Activated T-helper 2 cell treated with anti-CD3 and anti-CD28 coated beads, Interferon-gamma antibody, Interleukin-2, Interleukin-4, amounts not matched to agents 10 μg/mL and 5 μg/mL and 100 μg/mL, durations not matched to agents 14 hours and 24 hours and 36 hours (primary cell): ENCODE measurements at regions of chr16 and their contacts with region 1.

Region 1: DNA sequence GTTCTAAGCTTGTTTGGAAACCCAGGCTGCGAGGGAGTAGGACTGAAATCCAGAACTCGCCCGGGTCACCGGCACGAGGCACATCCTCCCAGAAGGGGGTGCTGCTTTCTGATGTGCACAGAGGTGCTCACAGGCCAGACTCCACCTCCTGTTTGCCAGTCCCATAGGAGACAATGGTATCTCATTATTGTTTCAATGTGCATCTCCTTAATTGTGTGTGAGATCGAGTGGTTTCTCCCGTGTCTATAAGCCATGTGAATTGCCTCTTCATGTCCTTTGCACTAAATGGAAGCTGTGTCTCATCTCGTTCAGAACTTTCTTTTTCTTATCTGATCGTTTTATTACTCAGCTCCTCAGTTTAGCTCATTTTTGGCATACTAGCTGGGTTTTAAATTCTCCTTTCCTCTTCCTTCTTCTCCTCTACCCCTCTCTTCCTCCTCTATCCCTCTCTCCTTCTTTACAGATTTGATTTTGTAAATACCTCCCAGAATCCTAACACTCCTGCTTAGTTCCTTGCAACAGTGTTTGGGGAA is 32.1 kb upstream of the PRKCB start:
- DNase-seq: peak; percentile 60
- H3K4me3 Mint-ChIP-seq: no peak overlapping the region
- H3K27ac Mint-ChIP-seq: peak overlapping the region; percentile 11
- H3K4me1 Mint-ChIP-seq: peaks cover 12% of the 10 kb centered on the region
- H3K27me3 Mint-ChIP-seq: peaks cover 6% of the 10 kb centered on the region

Region 2: GRCh38 chr16:22829997-22830396 is 973.7 kb before region 1 on chr16:
- intact Hi-C with region 1: no loop called
- DNase-seq: no peak
- H3K4me3 Mint-ChIP-seq: no peak overlapping the region
- H3K27ac Mint-ChIP-seq: no peak overlapping the region
- H3K4me1 Mint-ChIP-seq: no peaks in the 10 kb centered on the region
- H3K27me3 Mint-ChIP-seq: peaks cover 8% of the 10 kb centered on the region

Region 3: GRCh38 chr16:23842137-23842600 is 38.5 kb after region 1 on chr16:
- intact Hi-C with region 1: loop called (anchors 2 kb)
- DNase-seq: peak; percentile 25
- H3K4me3 Mint-ChIP-seq: peak overlapping the region; percentile 27
- H3K27ac Mint-ChIP-seq: peak overlapping the region; percentile 88
- H3K4me1 Mint-ChIP-seq: peaks cover 80% of the 10 kb centered on the region
- H3K27me3 Mint-ChIP-seq: no peaks in the 10 kb centered on the region

Region 4: GRCh38 chr16:23959072-23959751 is 155.6 kb after region 1 on chr16:
- intact Hi-C with region 1: loop called (anchors 5 kb)
- DNase-seq: no peak
- H3K4me3 Mint-ChIP-seq: peak overlapping the region; percentile 37
- H3K27ac Mint-ChIP-seq: peak overlapping the region; percentile 74
- H3K4me1 Mint-ChIP-seq: peaks cover 52% of the 10 kb centered on the region
- H3K27me3 Mint-ChIP-seq: no peaks in the 10 kb centered on the region

Region 5: GRCh38 chr16:24036614-24037013 is 233.0 kb after region 1 on chr16:
- intact Hi-C with region 1: loop called (anchors 1 kb)
- DNase-seq: no peak
- H3K4me3 Mint-ChIP-seq: no peak overlapping the region
- H3K27ac Mint-ChIP-seq: peak overlapping the region; percentile 7
- H3K4me1 Mint-ChIP-seq: peaks cover 25% of the 10 kb centered on the region
- H3K27me3 Mint-ChIP-seq: no peaks in the 10 kb centered on the region

Region 6: DNA sequence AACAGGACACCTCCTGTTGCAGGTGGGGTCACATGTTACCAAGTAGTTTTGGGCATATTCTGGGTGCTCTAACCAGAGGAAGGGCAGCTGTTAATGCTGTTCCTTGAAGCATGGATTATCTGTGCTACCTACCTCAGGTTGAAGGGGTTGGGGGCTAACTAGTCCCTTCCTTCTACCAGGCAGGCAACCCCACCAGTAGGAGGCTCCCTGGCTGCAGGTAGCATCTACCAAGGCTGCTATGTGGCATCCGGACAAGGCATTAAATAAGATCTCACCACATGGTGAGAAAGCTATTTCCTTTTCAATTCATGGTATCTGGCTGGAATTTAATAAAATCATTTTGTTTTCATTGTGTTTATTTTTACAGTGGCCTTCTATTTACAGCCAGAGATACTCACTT is 515.0 kb after region 1 on chr16:
- intact Hi-C with region 1: no loop called
- DNase-seq: no peak
- H3K4me3 Mint-ChIP-seq: no peak overlapping the region
- H3K27ac Mint-ChIP-seq: no peak overlapping the region
- H3K4me1 Mint-ChIP-seq: no peaks in the 10 kb centered on the region
- H3K27me3 Mint-ChIP-seq: peaks cover 5% of the 10 kb centered on the region

Region 7: GRCh38 chr16:24504472-24505345 is 701.1 kb after region 1 on chr16:
- intact Hi-C with region 1: loop called (anchors 10 kb)
- DNase-seq: peak; percentile 42
- H3K4me3 Mint-ChIP-seq: no peak overlapping the region
- H3K27ac Mint-ChIP-seq: no peak overlapping the region
- H3K4me1 Mint-ChIP-seq: no peaks in the 10 kb centered on the region
- H3K27me3 Mint-ChIP-seq: peaks cover 6% of the 10 kb centered on the region